Mucosa of descending colon (tissue), 3 donors: ENCODE measurements at regions of chr3 and their contacts with region 1.

Region 1: DNA sequence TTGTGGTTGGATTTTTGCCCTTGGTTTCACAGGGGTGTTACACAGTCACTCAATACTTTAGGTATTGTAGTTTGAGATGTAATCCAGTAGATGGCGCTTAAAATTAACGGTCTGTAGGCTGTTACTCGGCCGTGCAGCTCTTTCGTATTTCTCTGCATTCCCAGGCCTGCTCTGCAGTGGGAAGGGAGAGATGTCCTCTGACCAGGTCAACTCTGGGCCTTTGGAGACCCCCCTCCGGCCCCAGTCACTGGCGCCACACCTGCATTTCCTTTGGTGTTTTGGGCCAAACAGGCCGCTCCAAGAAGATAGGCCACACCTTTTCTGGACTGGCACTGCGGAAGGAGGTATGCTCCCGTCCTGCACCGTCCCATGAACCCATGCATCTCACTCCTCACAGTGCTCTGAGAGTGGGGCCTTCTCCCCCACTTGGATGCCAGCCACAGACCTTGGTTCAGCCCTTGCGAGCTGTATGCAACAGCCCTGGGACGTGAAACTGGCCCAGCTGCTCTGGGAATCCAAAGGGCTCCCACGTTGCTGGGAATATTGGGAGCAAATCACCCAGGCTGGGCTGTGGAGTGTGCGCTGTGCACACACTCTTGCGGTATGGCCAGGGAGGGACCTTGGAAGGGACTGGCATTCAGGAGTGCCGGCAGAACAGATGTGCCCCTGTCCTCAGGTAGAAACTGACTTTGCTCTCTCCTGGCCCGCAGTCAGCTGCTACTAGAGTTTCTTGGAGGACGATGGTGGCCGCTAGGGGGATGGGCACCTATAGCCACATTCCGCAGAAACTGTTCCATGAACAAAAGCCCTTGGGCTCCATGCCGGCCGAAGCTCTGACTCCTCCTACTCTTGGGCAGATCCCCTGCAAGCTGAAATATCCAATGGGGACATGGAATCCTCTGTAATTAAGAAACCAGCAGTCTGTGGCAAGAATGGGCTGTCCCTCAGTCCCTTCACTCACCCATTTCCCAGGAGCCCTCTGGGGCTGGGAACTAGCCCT is 410.5 kb upstream of the CADM2 start:
- DNase-seq: peak in 1 of 3 donors; percentile 25
- ATAC-seq: peak; percentile 58
- H3K4me3 ChIP-seq: no peak overlapping the region
- H3K4me1 ChIP-seq: no peaks in the 10 kb centered on the region
- CTCF ChIP-seq: no peak

Region 2: GRCh38 chr3:85576091-85576690 is 1027.9 kb after region 1 on chr3:
- intact Hi-C with region 1: loop called in 1 of 2 experiments (anchors 5 kb)
- DNase-seq: peak in 2 of 3 donors; percentile 25 to 55
- ATAC-seq: peak; percentile 66
- H3K4me3 ChIP-seq: no peak overlapping the region
- H3K4me1 ChIP-seq: no peaks in the 10 kb centered on the region
- CTCF ChIP-seq: peak; percentile 66